Mammary epithelial cell (primary cell): ENCODE measurements at regions of chr10 and their contacts with region 1.

Region 1: GRCh38 chr10:30591249-30591670 is 38.3 kb downstream of the LYZL2 start:
- DNase-seq: peak; percentile 42
- H3K4me3 ChIP-seq: no peak overlapping the region
- H3K27ac ChIP-seq: no peak overlapping the region
- H3K4me1 ChIP-seq: no peaks in the 10 kb centered on the region
- H3K27me3 ChIP-seq: peaks cover 5% of the 10 kb centered on the region
- CTCF ChIP-seq: peak; percentile 63 to 70

Region 2: GRCh38 chr10:30284865-30285594 is 306.2 kb before region 1 on chr10:
- CTCF ChIA-PET with region 1: no interaction called
- dilution Hi-C with region 1: no loop called
- in situ Hi-C with region 1: no loop called
- intact Hi-C with region 1: loop called (anchors 10 kb)
- DNase-seq: peak; percentile 40
- H3K4me3 ChIP-seq: no peak overlapping the region
- H3K27ac ChIP-seq: no peak overlapping the region
- H3K4me1 ChIP-seq: no peaks in the 10 kb centered on the region
- H3K27me3 ChIP-seq: peaks cover 3% of the 10 kb centered on the region
- CTCF ChIP-seq: no peak

Region 3: DNA sequence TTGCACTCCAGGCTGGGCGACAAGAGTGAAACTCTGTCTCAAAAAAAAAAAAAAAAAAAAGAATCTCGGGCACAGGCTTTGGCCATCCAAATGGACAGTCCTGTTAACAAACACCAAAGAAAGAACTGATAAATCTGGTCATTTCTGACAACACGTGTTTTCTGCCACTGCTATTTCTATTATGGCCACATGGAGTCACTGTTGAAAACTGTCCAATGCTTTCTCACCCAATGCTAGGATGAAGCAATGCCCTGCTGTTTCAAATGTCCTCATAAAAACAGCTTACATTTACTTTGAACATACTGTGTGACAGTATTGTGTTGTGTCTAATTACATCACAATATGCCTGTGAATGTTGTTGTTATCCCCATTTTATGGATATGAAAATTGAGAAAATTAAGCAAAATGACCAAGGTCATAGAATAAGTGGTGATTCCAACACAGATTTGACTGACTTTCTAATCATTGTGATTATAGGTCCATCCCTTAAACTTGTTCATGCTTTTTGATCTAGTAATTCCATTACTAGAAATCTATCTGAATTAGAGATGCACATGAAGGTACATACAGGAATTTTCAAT is 177.2 kb before region 1 on chr10:
- CTCF ChIA-PET with region 1: no interaction called
- dilution Hi-C with region 1: no loop called
- in situ Hi-C with region 1: no loop called
- intact Hi-C with region 1: loop called (anchors 1 kb)
- DNase-seq: peak; percentile 48
- H3K4me3 ChIP-seq: no peak overlapping the region
- H3K27ac ChIP-seq: no peak overlapping the region
- H3K4me1 ChIP-seq: no peaks in the 10 kb centered on the region
- H3K27me3 ChIP-seq: no peaks in the 10 kb centered on the region
- CTCF ChIP-seq: peak; percentile 86 to 89

Region 4: GRCh38 chr10:30534465-30535144 is 56.7 kb before region 1 on chr10:
- CTCF ChIA-PET with region 1: no interaction called
- dilution Hi-C with region 1: no loop called
- in situ Hi-C with region 1: no loop called
- intact Hi-C with region 1: loop called (anchors 2 kb)
- DNase-seq: peak; percentile 42
- H3K4me3 ChIP-seq: no peak overlapping the region
- H3K27ac ChIP-seq: no peak overlapping the region
- H3K4me1 ChIP-seq: peaks cover 5% of the 10 kb centered on the region
- H3K27me3 ChIP-seq: no peaks in the 10 kb centered on the region
- CTCF ChIP-seq: peak; percentile 80 to 89